Endothelial cell of umbilical vein (primary cell): ENCODE measurements at regions of chr14 and their contacts with region 1.

Region 1: GRCh38 chr14:76352639-76353281 is 23.2 kb upstream of the ESRRB start:
- DNase-seq: peak; percentile 37
- H3K4me3 ChIP-seq: no peak overlapping the region
- H3K27ac ChIP-seq: no peak overlapping the region
- H3K4me1 ChIP-seq: peaks cover 18% of the 10 kb centered on the region
- H3K27me3 ChIP-seq: peaks cover 0 to 7% of the 10 kb centered on the region in 2 experiments
- CTCF ChIP-seq: peak; percentile 88 to 93
- POLR2A ChIP-seq: no peak

Region 2: GRCh38 chr14:76101377-76102010 is 251.3 kb before region 1 on chr14:
- CTCF ChIA-PET with region 1: interaction called, 10 read pairs
- POLR2A ChIA-PET with region 1: no interaction called
- dilution Hi-C with region 1: no loop called
- intact Hi-C with region 1: no loop called
- DNase-seq: no peak
- H3K4me3 ChIP-seq: no peak overlapping the region
- H3K27ac ChIP-seq: no peak overlapping the region
- H3K4me1 ChIP-seq: no peaks in the 10 kb centered on the region
- H3K27me3 ChIP-seq: peaks cover 0 to 1% of the 10 kb centered on the region in 2 experiments
- CTCF ChIP-seq: no peak
- POLR2A ChIP-seq: no peak

Region 3: DNA sequence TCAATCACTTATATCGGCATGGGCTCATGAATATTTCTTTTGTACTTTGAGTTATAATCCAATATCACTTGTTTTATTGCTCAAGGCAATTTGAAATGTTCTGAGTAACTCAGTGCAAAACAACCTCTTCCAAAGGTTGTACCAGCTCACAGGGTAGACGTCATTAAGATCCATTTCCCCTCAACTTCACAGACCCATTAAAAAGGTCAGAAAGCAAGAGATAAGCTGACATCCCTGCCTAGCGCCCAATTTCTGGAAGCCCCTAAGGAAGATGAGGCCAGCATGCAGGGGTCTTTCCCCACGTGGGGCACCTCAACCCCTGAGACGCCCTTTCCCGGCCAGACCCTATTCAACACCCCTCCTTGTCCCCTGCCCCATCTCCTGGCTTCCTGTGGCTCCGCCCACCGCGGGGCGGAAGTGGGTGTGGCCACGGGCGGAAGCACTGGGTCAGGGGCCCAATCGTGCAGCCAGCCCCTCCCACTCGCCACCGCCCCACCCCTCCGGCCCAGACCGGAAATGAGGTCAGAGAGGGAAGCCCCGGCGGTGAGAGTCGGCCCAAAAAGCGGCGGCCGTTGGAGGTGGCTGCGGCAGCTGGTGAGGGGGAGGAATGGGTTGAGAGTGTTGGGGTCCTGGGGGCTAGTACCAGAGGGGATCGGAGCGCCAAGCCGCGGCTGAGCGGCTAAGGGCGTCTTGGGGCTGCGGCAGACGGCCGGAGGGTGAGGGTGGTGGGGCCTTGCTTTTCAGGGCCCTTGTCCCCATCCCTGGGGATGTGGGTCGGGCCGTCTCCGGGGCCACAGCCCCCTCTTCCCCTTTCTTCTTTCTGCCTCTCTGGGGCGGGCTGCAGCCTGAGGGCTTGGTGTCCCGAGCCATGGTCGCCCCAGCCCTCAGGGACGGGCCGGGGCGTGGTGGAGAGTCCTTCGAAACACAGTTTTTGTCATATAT is 201.1 kb before region 1 on chr14 and contains the start of gene GPATCH2L:
- CTCF ChIA-PET with region 1: interaction called, 6 read pairs
- POLR2A ChIA-PET with region 1: no interaction called
- dilution Hi-C with region 1: no loop called
- intact Hi-C with region 1: loop called (anchors 1 kb)
- DNase-seq: peak; percentile 86
- H3K4me3 ChIP-seq: peak within 1 kb of the TSS; percentile 66 to 89 (median 81)
- H3K27ac ChIP-seq: peak within 1 kb of the TSS; percentile 88
- H3K4me1 ChIP-seq: peaks cover 34% of the 10 kb centered on the region
- H3K27me3 ChIP-seq: peaks cover 8 to 11% of the 10 kb centered on the region in 2 experiments
- CTCF ChIP-seq: no peak
- POLR2A ChIP-seq: peak; percentile 83
- total RNA-seq, gene GPATCH2L: 40.0 and 47.4 TPM in 2 replicates

Region 4: GRCh38 chr14:76196980-76197695 is 155.6 kb before region 1 on chr14:
- CTCF ChIA-PET with region 1: no interaction called
- POLR2A ChIA-PET with region 1: no interaction called
- dilution Hi-C with region 1: no loop called
- intact Hi-C with region 1: loop called (anchors 5 kb)
- DNase-seq: no peak
- H3K4me3 ChIP-seq: no peak overlapping the region
- H3K27ac ChIP-seq: no peak overlapping the region
- H3K4me1 ChIP-seq: peaks cover 3% of the 10 kb centered on the region
- H3K27me3 ChIP-seq: no peaks in the 10 kb centered on the region
- CTCF ChIP-seq: no peak
- POLR2A ChIP-seq: no peak

Region 5: DNA sequence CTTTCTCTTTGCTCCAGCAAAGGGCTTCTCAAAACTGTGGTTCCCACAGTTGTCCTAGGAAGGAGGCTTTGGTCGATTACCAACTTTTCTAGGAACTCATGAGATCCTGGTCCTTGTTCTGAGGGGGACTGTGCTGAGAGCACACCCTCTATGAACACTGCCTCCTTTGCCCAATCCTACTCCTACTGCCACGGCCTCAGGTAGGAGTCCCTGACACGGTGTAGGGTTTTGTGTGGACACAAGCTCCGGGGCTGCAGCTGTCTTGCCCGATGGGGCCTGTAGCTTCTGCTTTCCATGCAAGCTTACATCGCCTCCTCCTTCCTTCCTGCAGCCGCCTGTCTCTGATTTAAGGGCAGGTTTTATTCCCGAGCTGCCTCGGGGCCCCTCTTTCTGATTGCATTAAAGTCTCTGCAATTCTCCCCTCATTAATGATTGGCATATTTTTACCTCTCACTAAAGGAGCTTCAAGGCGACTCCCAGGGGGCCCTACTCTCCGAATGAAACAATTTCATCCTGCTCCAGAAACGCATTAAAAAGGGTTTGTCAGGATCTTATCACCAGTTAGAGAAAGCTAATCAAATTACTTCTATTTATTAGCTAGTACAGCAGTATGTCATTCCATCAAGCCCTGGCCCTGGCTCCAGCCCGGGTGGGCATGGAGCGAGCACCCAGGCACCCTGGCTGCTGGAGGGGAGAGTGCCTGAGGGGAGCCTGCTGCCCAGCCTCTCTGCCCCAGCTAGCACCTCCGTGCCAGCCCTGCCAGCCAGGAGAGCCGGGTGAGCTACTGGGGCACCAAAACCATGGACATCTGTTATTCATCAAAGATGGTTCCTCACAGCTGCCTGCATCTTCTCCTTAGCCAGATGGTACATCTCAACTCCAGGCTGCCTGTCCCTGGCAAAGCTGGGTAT is 14.9 kb before region 1 on chr14:
- CTCF ChIA-PET with region 1: interaction called, 11 read pairs
- POLR2A ChIA-PET with region 1: no interaction called
- dilution Hi-C with region 1: no loop called
- intact Hi-C with region 1: no loop called
- DNase-seq: no peak
- H3K4me3 ChIP-seq: no peak overlapping the region
- H3K27ac ChIP-seq: no peak overlapping the region
- H3K4me1 ChIP-seq: no peaks in the 10 kb centered on the region
- H3K27me3 ChIP-seq: peaks cover 0 to 16% of the 10 kb centered on the region in 2 experiments
- CTCF ChIP-seq: no peak
- POLR2A ChIP-seq: no peak